ENCODE measurements at regions of chr2 and their contacts with region 1.

Region 1: GRCh38 chr2:232600053-232600773 is 33.2 kb upstream of the EFHD1 start:
- DNase-seq: no peak
- H3K4me3 ChIP-seq: no peak overlapping the region
- H3K27ac ChIP-seq: no peak overlapping the region
- H3K27me3 ChIP-seq: no peaks in the 10 kb centered on the region
- CTCF ChIP-seq: no peak

Region 2: DNA sequence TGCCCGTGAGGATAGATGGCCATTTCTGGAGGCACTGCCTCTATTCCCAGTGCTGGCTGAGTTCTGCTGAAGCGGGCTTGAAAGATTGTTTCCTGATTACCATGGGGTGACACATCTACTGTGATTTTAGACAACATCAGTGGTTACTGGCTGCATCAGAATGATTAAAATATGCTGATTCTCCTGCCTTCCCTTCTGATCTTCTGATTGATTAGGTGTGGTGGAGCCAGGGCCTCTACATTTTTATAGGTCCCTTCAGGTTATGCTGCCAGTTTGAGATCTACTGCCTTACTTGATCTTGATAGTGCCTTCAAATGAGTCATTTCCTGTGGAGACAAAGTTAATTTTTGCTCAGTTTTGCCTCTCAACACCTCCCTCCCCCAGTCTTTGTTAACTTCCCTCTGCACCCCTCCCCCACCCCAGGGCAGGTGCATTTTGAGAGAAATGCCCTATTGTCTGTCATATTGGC is 238.2 kb after region 1 on chr2:
- intact Hi-C with region 1: loop called in 1 of 2 experiments (anchors 10 kb)
- DNase-seq: no peak
- H3K4me3 ChIP-seq: no peak overlapping the region
- H3K27ac ChIP-seq: peak overlapping the region in 17 of 59 donors; percentile 1 to 55 (median 34)
- H3K27me3 ChIP-seq: no peaks in the 10 kb centered on the region
- CTCF ChIP-seq: no peak

Measured in dorsolateral prefrontal cortex (tissue), 120 donors.